Heart left ventricle (tissue), 16 donors: ENCODE measurements at regions of chr2 and their contacts with region 1.

Region 1: GRCh38 chr2:177489719-177490301 is 97.2 kb downstream of the AGPS start:
- DNase-seq: no peak
- ATAC-seq: no peak
- H3K4me3 ChIP-seq: no peak overlapping the region
- H3K27ac ChIP-seq: no peak overlapping the region
- H3K4me1 ChIP-seq: peaks cover 0 to 3% (median 0%) of the 10 kb centered on the region in 12 donors
- H3K27me3 ChIP-seq: no peaks in the 10 kb centered on the region
- CTCF ChIP-seq: peak; percentile 33 to 71 (median 60)
- POLR2A ChIP-seq: no peak

Region 2: GRCh38 chr2:177460973-177461585 is 28.7 kb before region 1 on chr2:
- intact Hi-C with region 1: no loop called
- DNase-seq: no peak
- ATAC-seq: no peak
- H3K4me3 ChIP-seq: no peak overlapping the region
- H3K27ac ChIP-seq: no peak overlapping the region
- H3K4me1 ChIP-seq: no peaks in the 10 kb centered on the region
- H3K27me3 ChIP-seq: no peaks in the 10 kb centered on the region
- CTCF ChIP-seq: no peak
- POLR2A ChIP-seq: no peak

Region 3: DNA sequence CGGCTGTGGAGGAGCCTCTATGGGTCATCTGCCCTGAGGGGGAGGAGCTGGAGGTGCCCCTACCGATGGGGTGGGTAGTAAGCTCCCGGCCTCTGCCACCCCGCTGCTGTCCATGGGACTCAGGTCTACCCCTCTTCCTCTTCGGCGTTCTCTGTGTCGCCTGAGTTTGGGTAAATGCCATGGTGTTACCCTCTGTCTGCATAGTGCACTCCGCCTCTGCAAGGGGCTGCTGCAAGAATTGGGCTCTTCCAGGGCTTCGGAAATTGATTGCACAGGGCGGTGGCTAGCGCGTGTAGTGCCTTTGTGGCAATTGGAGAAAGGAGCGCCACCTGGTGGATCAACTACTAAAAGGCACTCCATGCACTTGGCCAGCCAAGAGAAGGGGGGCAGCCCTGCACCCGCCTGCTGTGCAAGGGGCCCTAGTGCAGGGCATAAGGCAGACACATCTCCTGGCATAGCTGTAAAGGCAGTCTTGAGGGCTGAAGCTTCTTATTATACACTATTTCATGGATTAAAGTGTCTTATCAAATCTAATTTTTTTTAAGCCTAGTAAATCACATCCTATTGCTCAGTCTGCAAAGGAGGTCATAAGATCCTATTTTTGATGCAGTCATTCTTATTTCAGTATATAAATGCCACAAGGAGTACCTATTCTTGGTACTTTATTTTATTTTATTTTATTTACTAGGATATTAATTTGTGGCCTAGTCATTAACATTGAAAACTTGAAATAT is 273.9 kb after region 1 on chr2:
- intact Hi-C with region 1: loop called in 1 of 10 experiments (anchors 5 kb)
- DNase-seq: peak; percentile 70 to 81 (median 74)
- ATAC-seq: peak; percentile 49 to 89 (median 86)
- H3K4me3 ChIP-seq: peak overlapping the region in 1 of 12 donors; percentile 24
- H3K27ac ChIP-seq: no peak overlapping the region
- H3K4me1 ChIP-seq: peaks cover 0 to 15% (median 2%) of the 10 kb centered on the region in 12 donors
- H3K27me3 ChIP-seq: no peaks in the 10 kb centered on the region
- CTCF ChIP-seq: peak; percentile 74 to 90 (median 82)
- POLR2A ChIP-seq: no peak